Tibial artery (tissue), 4 donors: ENCODE measurements at regions of chr15 and their contacts with region 1.

Region 1: GRCh38 chr15:47620965-47621685 is 96.2 kb upstream of the SEMA6D start:
- DNase-seq: no peak
- H3K4me3 ChIP-seq: no peak overlapping the region
- H3K27ac ChIP-seq: no peak overlapping the region
- H3K4me1 ChIP-seq: peaks cover 0 to 6% (median 0%) of the 10 kb centered on the region in 4 donors
- H3K27me3 ChIP-seq: no peaks in the 10 kb centered on the region
- CTCF ChIP-seq: no peak

Region 2: DNA sequence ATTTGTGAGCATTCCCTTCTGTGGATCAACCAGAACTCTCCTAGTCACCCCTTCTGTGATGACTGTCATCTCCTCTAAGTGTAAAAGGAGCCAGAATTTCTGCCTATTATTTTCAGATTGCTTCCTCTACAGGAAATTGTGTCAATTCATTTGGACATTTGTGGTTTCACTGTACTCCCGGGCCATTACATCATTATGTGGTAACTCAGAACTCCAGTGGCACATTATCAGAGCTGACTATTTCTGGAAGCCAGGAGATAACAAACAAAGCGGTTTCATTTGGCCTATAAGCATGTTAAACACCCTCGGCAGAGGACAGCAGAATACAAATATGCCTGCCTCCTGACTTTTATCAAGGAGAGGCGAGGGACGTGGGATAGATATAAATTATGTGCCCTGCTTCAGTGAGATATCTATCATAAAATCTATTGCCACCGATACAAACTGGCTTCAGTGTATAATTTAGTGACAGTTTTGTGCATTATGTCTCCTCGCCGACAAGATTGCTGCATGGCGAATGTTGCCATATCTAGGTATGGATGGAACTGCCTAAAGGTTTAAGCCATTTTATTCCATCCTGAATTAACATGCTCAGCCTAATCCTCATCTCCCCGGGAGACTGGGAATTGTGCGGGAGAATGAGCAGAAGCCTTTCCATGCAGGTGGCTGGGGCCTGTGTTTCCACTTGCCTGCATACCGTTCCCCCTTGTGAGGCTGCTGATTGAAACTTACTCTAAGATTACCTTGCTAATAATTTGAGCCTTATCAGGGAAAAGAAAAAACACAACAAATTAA is 97.2 kb before region 1 on chr15:
- intact Hi-C with region 1: no loop called
- DNase-seq: no peak
- H3K4me3 ChIP-seq: no peak overlapping the region
- H3K27ac ChIP-seq: no peak overlapping the region
- H3K4me1 ChIP-seq: no peaks in the 10 kb centered on the region
- H3K27me3 ChIP-seq: no peaks in the 10 kb centered on the region
- CTCF ChIP-seq: no peak

Region 3: DNA sequence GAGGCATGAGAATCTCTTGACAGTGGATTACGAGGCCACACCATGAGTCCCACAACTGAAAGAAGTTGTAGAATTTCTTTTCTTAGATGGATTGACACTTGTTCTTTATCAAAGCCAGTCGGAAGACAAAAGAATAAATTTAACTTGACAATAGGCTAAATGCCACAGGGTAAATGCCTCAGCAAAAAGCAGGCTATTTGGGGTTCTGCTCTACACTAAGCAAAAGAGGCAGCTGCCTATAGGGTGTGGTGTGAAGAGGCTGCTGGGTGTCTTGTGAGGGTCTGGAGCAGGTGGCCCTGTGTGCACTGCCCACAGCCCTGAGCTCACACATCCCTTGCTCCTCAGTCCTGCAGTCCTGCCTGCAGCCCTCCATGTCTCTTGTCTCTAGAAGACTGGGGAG is 38.8 kb before region 1 on chr15:
- intact Hi-C with region 1: loop called (anchors 5 kb)
- DNase-seq: no peak
- H3K4me3 ChIP-seq: no peak overlapping the region
- H3K27ac ChIP-seq: no peak overlapping the region
- H3K4me1 ChIP-seq: peaks cover 0 to 15% (median 11%) of the 10 kb centered on the region in 4 donors
- H3K27me3 ChIP-seq: no peaks in the 10 kb centered on the region
- CTCF ChIP-seq: no peak

Region 4: DNA sequence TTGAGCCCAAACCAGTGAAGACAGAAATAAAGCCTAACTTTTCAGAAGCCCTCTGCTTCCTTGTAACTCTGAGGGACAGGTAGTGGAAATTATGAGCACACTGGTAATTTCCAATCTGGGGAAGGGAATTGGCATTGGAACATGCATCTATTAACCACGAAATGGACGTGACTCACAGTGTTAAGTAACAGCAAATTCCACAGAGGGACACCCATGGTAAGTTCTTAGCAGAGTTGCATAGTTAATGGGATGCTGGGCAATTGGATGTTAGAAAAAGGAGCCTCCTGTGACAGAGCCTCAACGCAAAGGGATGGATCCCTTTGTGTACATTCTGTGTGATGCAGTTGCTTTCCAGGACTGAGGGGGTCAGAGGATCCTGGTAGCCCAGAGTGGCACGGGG is 264.8 kb after region 1 on chr15:
- intact Hi-C with region 1: no loop called
- DNase-seq: no peak
- H3K4me3 ChIP-seq: no peak overlapping the region
- H3K27ac ChIP-seq: no peak overlapping the region
- H3K4me1 ChIP-seq: peaks cover 0 to 17% (median 2%) of the 10 kb centered on the region in 4 donors
- H3K27me3 ChIP-seq: no peaks in the 10 kb centered on the region
- CTCF ChIP-seq: no peak

Region 5: GRCh38 chr15:48225786-48226502 is 604.8 kb after region 1 on chr15:
- intact Hi-C with region 1: no loop called
- DNase-seq: no peak
- H3K4me3 ChIP-seq: no peak overlapping the region
- H3K27ac ChIP-seq: no peak overlapping the region
- H3K4me1 ChIP-seq: peaks cover 0 to 56% (median 22%) of the 10 kb centered on the region in 4 donors
- H3K27me3 ChIP-seq: no peaks in the 10 kb centered on the region
- CTCF ChIP-seq: no peak